ENCODE measurements at regions of chr9 and their contacts with region 1.

Region 1: GRCh38 chr9:137672907-137673791 is 54.3 kb downstream of the EHMT1 start:
- DNase-seq: peak; percentile 39 to 56
- H3K4me3 ChIP-seq: no peak overlapping the region
- H3K27ac ChIP-seq: no peak overlapping the region
- H3K4me1 ChIP-seq: no peaks in the 10 kb centered on the region
- H3K27me3 ChIP-seq: no peaks in the 10 kb centered on the region
- CTCF ChIP-seq: peak; percentile 89

Region 2: DNA sequence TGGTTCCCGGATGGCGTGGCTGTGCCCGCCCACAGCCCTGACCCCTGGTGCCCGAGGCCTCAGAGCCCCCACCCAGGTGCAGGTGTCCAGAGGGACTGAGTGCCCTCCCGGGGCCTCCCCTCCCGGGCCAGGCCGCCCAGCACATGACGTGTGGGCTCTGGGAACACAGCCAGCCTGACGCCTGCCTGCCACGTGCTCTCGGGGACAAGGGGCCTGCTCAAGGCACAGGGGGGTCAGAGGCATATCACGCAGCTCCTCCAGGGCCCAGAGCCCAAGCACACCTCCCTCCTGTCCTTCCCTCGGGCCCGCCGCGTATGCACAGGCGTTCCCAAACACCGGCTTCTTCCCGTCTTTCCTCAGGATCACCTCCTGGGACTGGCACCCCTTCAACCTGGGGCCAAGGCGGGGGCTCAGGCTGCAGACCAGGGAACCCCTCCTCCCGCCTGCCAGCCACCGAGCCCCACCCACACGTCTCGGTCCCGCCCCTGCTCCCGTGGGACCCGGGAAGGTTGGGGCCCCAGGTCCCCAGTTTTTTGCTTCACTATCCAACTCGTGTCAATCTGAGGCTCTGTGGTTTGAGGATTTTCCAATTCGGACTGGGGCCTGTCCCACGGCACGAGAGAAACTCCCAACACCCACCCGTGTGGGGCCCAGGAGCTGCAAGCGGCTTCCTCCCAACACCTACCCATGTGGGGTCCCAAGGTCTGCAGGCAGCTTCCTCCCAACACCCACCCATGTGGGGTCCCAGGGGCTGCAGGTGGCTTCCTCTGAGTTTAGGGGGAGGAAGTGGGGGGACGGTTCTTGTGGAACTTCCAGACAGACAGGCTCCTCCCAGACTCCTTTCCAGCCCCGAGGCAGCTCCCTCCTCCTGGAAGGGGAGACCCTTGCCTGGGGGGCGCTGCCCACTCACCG is 931.9 kb before region 1 on chr9:
- CTCF ChIA-PET with region 1: interaction called, 17 read pairs
- POLR2A ChIA-PET with region 1: no interaction called
- intact Hi-C with region 1: no loop called
- DNase-seq: no peak
- H3K4me3 ChIP-seq: no peak overlapping the region
- H3K27ac ChIP-seq: no peak overlapping the region
- H3K4me1 ChIP-seq: no peaks in the 10 kb centered on the region
- H3K27me3 ChIP-seq: peaks cover 81% of the 10 kb centered on the region
- CTCF ChIP-seq: no peak

Region 3: DNA sequence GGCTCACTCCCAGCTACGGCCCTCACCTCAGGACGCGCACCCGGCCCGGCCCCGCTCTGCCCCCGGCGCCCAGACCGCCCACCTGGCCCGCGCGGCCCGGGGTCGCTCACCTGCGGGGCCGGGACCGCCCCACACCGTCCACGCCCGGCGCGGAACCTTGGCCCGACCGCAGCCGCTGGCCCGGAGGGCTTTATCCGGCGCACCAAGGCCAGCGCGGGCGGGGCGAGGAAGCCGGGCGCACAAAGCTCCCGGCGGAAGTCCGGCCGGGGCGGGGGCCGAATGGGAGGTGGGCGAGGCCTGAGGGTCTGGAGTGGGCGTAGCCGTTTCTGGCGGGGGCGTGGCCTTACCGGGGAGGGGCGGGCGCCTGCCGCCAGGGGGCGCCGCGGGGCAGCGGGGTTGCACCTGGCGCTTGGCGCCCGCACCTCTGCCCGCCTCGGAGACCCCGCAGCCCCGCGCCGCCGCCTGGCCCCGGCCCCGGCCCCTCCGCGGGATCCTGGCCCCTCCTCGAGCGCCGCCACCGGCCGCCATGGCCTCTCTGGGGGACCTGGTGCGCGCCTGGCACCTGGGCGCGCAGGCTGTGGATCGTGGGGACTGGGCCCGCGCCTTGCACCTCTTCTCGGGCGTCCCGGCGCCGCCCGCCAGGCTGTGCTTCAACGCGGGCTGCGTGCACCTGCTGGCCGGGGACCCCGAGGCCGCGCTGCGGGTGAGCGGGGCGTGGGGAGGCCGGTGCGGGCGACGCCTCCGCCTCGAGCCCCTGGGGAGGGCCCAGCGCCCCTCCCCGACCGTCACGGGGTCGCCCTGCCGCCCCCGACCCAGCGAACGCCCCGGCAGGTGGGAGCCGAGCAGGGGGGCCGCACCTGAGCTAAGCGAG is 249.9 kb before region 1 on chr9 and contains the starts of genes EXD3 and NOXA1:
- CTCF ChIA-PET with region 1: interaction called, 17 read pairs
- POLR2A ChIA-PET with region 1: no interaction called
- intact Hi-C with region 1: no loop called
- DNase-seq: peak; percentile 72 to 97
- H3K4me3 ChIP-seq: peak within 1 kb of the TSS; percentile 92
- H3K27ac ChIP-seq: peak within 1 kb of the TSS; percentile 83
- H3K4me1 ChIP-seq: peaks cover 17% of the 10 kb centered on the region
- H3K27me3 ChIP-seq: no peaks in the 10 kb centered on the region
- CTCF ChIP-seq: peak; percentile 63
- total RNA-seq, gene EXD3: 23.7 and 38.5 TPM in 2 replicates
- total RNA-seq, gene NOXA1: 10.5 and 22.8 TPM in 2 replicates

Region 4: DNA sequence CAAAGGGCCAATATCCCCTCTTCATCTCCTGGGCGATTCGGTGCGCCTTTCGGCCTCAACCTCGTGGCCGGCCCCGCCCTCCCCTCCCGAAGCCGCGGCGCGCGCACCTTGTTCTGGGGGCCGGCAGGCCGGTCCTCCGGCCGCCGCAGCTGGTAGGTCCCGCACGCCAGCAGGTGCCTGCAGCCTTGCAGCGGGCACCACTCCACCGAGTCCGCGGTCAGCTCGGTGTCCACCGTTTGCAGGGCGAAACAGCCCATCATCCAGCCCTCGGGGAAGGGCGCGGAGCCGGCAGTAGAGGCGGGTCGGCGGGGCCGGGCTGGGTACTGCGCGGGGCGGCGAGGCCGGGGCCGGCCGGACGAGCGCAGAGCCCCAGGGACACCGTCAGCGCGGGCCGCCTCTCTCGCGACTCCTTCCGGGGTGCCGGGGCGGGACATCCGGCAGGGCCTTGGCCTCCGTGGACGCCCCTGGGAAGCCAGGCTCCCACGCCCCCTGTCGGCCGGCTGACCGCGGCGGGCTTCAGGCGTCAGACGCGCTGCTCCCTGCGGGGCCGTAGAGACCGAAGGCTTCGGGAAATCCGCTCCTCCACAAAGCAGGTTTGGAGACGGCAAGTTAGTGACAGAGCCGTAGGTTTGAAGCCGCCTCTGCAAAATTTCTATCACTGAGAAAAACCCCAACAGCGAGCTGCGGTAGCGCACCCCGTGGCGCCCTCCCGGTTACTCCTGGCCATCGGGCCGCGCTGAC is 94.5 kb before region 1 on chr9 and contains the start of gene DPH7:
- CTCF ChIA-PET with region 1: no interaction called
- POLR2A ChIA-PET with region 1: no interaction called
- intact Hi-C with region 1: loop called (anchors 2 kb)
- DNase-seq: peak; percentile 76 to 97
- H3K4me3 ChIP-seq: peak within 1 kb of the TSS; percentile 89
- H3K27ac ChIP-seq: peak within 1 kb of the TSS; percentile 55
- H3K4me1 ChIP-seq: peaks cover 17% of the 10 kb centered on the region
- H3K27me3 ChIP-seq: no peaks in the 10 kb centered on the region
- CTCF ChIP-seq: peak; percentile 85
- total RNA-seq, gene DPH7: 48.5 and 52.2 TPM in 2 replicates

Region 5: GRCh38 chr9:137745541-137745991 is 72.4 kb after region 1 on chr9:
- CTCF ChIA-PET with region 1: no interaction called
- POLR2A ChIA-PET with region 1: no interaction called
- intact Hi-C with region 1: loop called (anchors 10 kb)
- DNase-seq: peak in 1 of 2 experiments; percentile 76
- H3K4me3 ChIP-seq: no peak overlapping the region
- H3K27ac ChIP-seq: peak overlapping the region; percentile 17
- H3K4me1 ChIP-seq: peaks cover 8% of the 10 kb centered on the region; the same call in 1 of the 2 replicates
- H3K27me3 ChIP-seq: no peaks in the 10 kb centered on the region
- CTCF ChIP-seq: no peak

Region 6: GRCh38 chr9:137785704-137786161 is 112.6 kb after region 1 on chr9:
- CTCF ChIA-PET with region 1: no interaction called
- POLR2A ChIA-PET with region 1: no interaction called
- intact Hi-C with region 1: no loop called
- DNase-seq: no peak
- H3K4me3 ChIP-seq: no peak overlapping the region
- H3K27ac ChIP-seq: no peak overlapping the region
- H3K4me1 ChIP-seq: no peaks in the 10 kb centered on the region
- H3K27me3 ChIP-seq: no peaks in the 10 kb centered on the region
- CTCF ChIP-seq: no peak

Measured in PC-9 (cell line).